IMR-90 (cell line): ENCODE measurements at regions of chr6 and their contacts with region 1.

Region 1: DNA sequence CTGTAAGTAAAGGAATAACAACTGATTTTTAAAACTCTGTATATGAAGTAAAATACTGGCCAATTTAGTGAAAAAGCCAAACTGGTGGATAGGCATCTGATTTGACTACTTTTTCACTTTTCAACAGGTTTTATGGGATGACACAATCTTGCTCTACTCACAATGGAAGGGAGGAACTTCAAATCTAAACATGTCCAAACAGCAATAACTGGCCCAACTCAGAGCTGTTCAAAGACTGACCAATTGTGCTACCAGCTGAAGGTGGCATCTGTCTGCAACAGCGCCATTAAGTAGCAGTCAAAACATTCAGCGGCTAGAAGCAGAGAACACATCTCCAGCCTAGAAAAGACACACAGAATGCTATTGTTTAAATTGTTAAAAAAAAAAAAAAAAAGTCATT is 44.6 kb downstream of the SESN1 start:
- DNase-seq: no peak
- ATAC-seq: no peak
- H3K4me3 ChIP-seq: no peak overlapping the region
- H3K27ac ChIP-seq: no peak overlapping the region
- H3K4me1 ChIP-seq: peaks cover 1% of the 10 kb centered on the region; the same call in 1 of the 2 replicates
- H3K27me3 ChIP-seq: no peaks in the 10 kb centered on the region
- CTCF ChIP-seq: no peak
- POLR2A ChIP-seq: no peak
- RAD21 ChIP-seq: no peak

Region 2: GRCh38 chr6:108851756-108852155 is 198.3 kb before region 1 on chr6:
- CTCF ChIA-PET with region 1: no interaction called
- POLR2A ChIA-PET with region 1: no interaction called
- dilution Hi-C with region 1: no loop called
- in situ Hi-C with region 1: no loop called
- intact Hi-C with region 1: no loop called
- DNase-seq: no peak
- ATAC-seq: no peak
- H3K4me3 ChIP-seq: no peak overlapping the region
- H3K27ac ChIP-seq: no peak overlapping the region
- H3K4me1 ChIP-seq: peaks cover 4% of the 10 kb centered on the region
- H3K27me3 ChIP-seq: no peaks in the 10 kb centered on the region
- CTCF ChIP-seq: no peak
- POLR2A ChIP-seq: no peak
- RAD21 ChIP-seq: no peak

Region 3: GRCh38 chr6:109009236-109009961 is 40.6 kb before region 1 on chr6:
- CTCF ChIA-PET with region 1: no interaction called
- POLR2A ChIA-PET with region 1: no interaction called
- dilution Hi-C with region 1: no loop called
- in situ Hi-C with region 1: no loop called
- intact Hi-C with region 1: loop called (anchors 5 kb)
- DNase-seq: peak; percentile 82
- ATAC-seq: peak; percentile 100
- H3K4me3 ChIP-seq: peak overlapping the region; percentile 91
- H3K27ac ChIP-seq: peak overlapping the region; percentile 79
- H3K4me1 ChIP-seq: no peaks in the 10 kb centered on the region
- H3K27me3 ChIP-seq: no peaks in the 10 kb centered on the region
- CTCF ChIP-seq: no peak
- POLR2A ChIP-seq: no peak
- RAD21 ChIP-seq: no peak